Heart left ventricle (tissue), 16 donors: ENCODE measurements at regions of chr11 and their contacts with region 1.

Region 1: GRCh38 chr11:94750319-94751218 is 17.6 kb upstream of the AMOTL1 start:
- DNase-seq: peak in 4 of 5 donors; percentile 33 to 51 (median 34)
- ATAC-seq: peak; percentile 51 to 82 (median 71)
- H3K4me3 ChIP-seq: peak overlapping the region in 7 of 12 donors; percentile 8 to 45 (median 18)
- H3K27ac ChIP-seq: peak overlapping the region; percentile 39 to 81 (median 73)
- H3K4me1 ChIP-seq: peaks cover 0 to 34% (median 14%) of the 10 kb centered on the region in 12 donors
- H3K27me3 ChIP-seq: no peaks in the 10 kb centered on the region
- CTCF ChIP-seq: no peak
- POLR2A ChIP-seq: no peak

Region 2: GRCh38 chr11:94638902-94639373 is 111.6 kb before region 1 on chr11:
- intact Hi-C with region 1: loop called in 1 of 10 experiments (anchors 2 kb)
- DNase-seq: no peak
- ATAC-seq: peak; percentile 54 to 76 (median 70)
- H3K4me3 ChIP-seq: peak overlapping the region in 3 of 12 donors; percentile 5 to 15 (median 12)
- H3K27ac ChIP-seq: peak overlapping the region in 10 of 12 donors; percentile 9 to 86 (median 64)
- H3K4me1 ChIP-seq: peaks cover 0 to 28% (median 13%) of the 10 kb centered on the region in 12 donors
- H3K27me3 ChIP-seq: no peaks in the 10 kb centered on the region
- CTCF ChIP-seq: no peak
- POLR2A ChIP-seq: no peak

Region 3: GRCh38 chr11:94673951-94674491 is 76.5 kb before region 1 on chr11:
- intact Hi-C with region 1: no loop called
- DNase-seq: peak in 2 of 5 donors; percentile 32 to 35
- ATAC-seq: peak in 3 of 4 donors; percentile 69 to 85 (median 71)
- H3K4me3 ChIP-seq: no peak overlapping the region
- H3K27ac ChIP-seq: peak overlapping the region in 1 of 12 donors; percentile 39
- H3K4me1 ChIP-seq: peaks cover 0 to 11% (median 3%) of the 10 kb centered on the region in 12 donors
- H3K27me3 ChIP-seq: no peaks in the 10 kb centered on the region
- CTCF ChIP-seq: no peak
- POLR2A ChIP-seq: no peak

Region 4: DNA sequence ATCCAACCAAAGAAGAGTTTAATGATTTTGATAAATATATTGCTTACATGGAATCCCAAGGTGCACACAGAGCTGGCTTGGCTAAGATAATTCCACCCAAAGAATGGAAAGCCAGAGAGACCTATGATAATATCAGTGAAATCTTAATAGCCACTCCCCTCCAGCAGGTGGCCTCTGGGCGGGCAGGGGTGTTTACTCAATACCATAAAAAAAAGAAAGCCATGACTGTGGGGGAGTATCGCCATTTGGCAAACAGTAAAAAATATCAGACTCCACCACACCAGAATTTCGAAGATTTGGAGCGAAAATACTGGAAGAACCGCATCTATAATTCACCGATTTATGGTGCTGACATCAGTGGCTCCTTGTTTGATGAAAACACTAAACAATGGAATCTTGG is 246.9 kb after region 1 on chr11:
- intact Hi-C with region 1: no loop called
- DNase-seq: no peak
- ATAC-seq: no peak
- H3K4me3 ChIP-seq: no peak overlapping the region
- H3K27ac ChIP-seq: no peak overlapping the region
- H3K4me1 ChIP-seq: no peaks in the 10 kb centered on the region
- H3K27me3 ChIP-seq: no peaks in the 10 kb centered on the region
- CTCF ChIP-seq: no peak
- POLR2A ChIP-seq: no peak

Region 5: GRCh38 chr11:95028357-95028756 is 277.8 kb after region 1 on chr11:
- intact Hi-C with region 1: no loop called
- DNase-seq: no peak
- ATAC-seq: no peak
- H3K4me3 ChIP-seq: no peak overlapping the region
- H3K27ac ChIP-seq: no peak overlapping the region
- H3K4me1 ChIP-seq: no peaks in the 10 kb centered on the region
- H3K27me3 ChIP-seq: no peaks in the 10 kb centered on the region
- CTCF ChIP-seq: no peak
- POLR2A ChIP-seq: no peak